ENCODE measurements at regions of chr5 and their contacts with region 1.

Region 1: GRCh38 chr5:59380350-59380951 is 513.1 kb downstream of the PDE4D start:
- DNase-seq: peak; percentile 26
- ATAC-seq: peak; percentile 87
- H3K4me3 Mint-ChIP-seq: no peak overlapping the region
- H3K27ac Mint-ChIP-seq: no peak overlapping the region
- H3K4me1 Mint-ChIP-seq: no peaks in the 10 kb centered on the region
- H3K27me3 Mint-ChIP-seq: no peaks in the 10 kb centered on the region

Region 2: GRCh38 chr5:58871648-58872242 is 508.7 kb before region 1 on chr5:
- CTCF ChIA-PET with region 1: interaction called, 5 read pairs
- POLR2A ChIA-PET with region 1: no interaction called
- intact Hi-C with region 1: loop called in 1 of 2 experiments (anchors 2 kb)
- DNase-seq: peak; percentile 44
- ATAC-seq: no peak
- H3K4me3 Mint-ChIP-seq: no peak overlapping the region
- H3K27ac Mint-ChIP-seq: no peak overlapping the region
- H3K4me1 Mint-ChIP-seq: no peaks in the 10 kb centered on the region
- H3K27me3 Mint-ChIP-seq: peaks cover 13% of the 10 kb centered on the region

Region 3: DNA sequence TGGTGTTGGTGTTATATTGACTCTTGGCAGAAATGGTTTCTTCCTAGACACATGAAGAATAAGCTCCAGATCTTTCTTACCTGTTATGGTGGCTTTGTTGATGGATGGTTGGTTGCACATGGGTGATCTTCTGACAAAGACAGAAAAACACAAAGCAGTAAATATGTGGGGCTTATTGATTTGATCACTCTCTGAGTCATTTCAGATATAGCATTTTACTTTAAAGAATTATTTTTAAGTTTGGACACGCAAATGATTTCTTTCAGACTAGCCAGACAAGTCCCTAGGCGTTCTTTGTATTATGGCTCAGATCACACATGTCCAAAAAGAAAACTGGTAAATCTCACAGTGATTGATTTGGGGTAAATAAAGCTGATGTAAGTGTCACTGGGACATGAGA is 199.9 kb before region 1 on chr5:
- CTCF ChIA-PET with region 1: interaction called, 132 read pairs
- POLR2A ChIA-PET with region 1: no interaction called
- intact Hi-C with region 1: no loop called
- DNase-seq: no peak
- ATAC-seq: no peak
- H3K4me3 Mint-ChIP-seq: no peak overlapping the region
- H3K27ac Mint-ChIP-seq: no peak overlapping the region
- H3K4me1 Mint-ChIP-seq: peaks cover 8% of the 10 kb centered on the region
- H3K27me3 Mint-ChIP-seq: peaks cover 6% of the 10 kb centered on the region

Region 4: GRCh38 chr5:59506285-59506877 is 125.9 kb after region 1 on chr5:
- CTCF ChIA-PET with region 1: no interaction called
- POLR2A ChIA-PET with region 1: no interaction called
- intact Hi-C with region 1: no loop called
- DNase-seq: no peak
- ATAC-seq: no peak
- H3K4me3 Mint-ChIP-seq: no peak overlapping the region
- H3K27ac Mint-ChIP-seq: no peak overlapping the region
- H3K4me1 Mint-ChIP-seq: no peaks in the 10 kb centered on the region
- H3K27me3 Mint-ChIP-seq: peaks cover 2% of the 10 kb centered on the region

Measured in activated CD4-positive, alpha-beta T cell treated with anti-CD3 and anti-CD28 coated beads for 36 hours (primary cell).